ENCODE measurements at regions of chr1 and their contacts with region 1.

Region 1: GRCh38 chr1:150979092-150980056 is 2.7 kb upstream of the ANXA9 start:
- DNase-seq: peak; percentile 90
- H3K4me3 Mint-ChIP-seq: no peak overlapping the region
- H3K27ac Mint-ChIP-seq: peak overlapping the region; percentile 40
- H3K4me1 Mint-ChIP-seq: peaks cover 38% of the 10 kb centered on the region
- H3K27me3 Mint-ChIP-seq: no peaks in the 10 kb centered on the region

Region 2: GRCh38 chr1:150961799-150962198 is 17.6 kb before region 1 on chr1:
- CTCF ChIA-PET with region 1: interaction called, 15 read pairs
- POLR2A ChIA-PET with region 1: interaction called, 14 read pairs
- DNase-seq: no peak
- H3K4me3 Mint-ChIP-seq: no peak overlapping the region
- H3K27ac Mint-ChIP-seq: no peak overlapping the region
- H3K4me1 Mint-ChIP-seq: peaks cover 6% of the 10 kb centered on the region
- H3K27me3 Mint-ChIP-seq: no peaks in the 10 kb centered on the region

Region 3: GRCh38 chr1:150995896-150996295 is 16.5 kb after region 1 on chr1:
- CTCF ChIA-PET with region 1: interaction called, 94 read pairs
- POLR2A ChIA-PET with region 1: interaction called, 7 read pairs
- DNase-seq: peak; percentile 37
- H3K4me3 Mint-ChIP-seq: no peak overlapping the region
- H3K27ac Mint-ChIP-seq: no peak overlapping the region
- H3K4me1 Mint-ChIP-seq: peaks cover 4% of the 10 kb centered on the region
- H3K27me3 Mint-ChIP-seq: no peaks in the 10 kb centered on the region

Region 4: DNA sequence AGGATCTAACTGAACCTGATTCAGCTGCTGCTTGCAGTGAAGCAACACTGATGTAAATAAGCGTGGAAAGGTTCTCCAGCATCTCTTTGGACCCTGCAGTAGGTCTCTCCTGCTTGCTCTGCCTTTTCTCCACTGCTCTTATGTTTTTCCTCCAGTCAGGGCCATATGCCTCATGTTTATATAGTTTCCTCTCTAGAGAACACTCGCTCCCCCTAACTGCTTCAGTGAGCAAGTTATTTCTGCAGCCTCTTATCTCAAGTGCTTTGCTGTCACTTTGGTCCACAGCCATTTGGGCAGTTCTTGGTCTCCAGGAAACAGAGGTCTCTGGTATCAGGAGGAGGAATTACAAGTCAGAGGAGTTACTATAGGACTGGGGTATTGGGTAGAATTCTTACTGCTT is 34.1 kb after region 1 on chr1:
- CTCF ChIA-PET with region 1: no interaction called
- POLR2A ChIA-PET with region 1: no interaction called
- DNase-seq: no peak
- H3K4me3 Mint-ChIP-seq: no peak overlapping the region
- H3K27ac Mint-ChIP-seq: no peak overlapping the region
- H3K4me1 Mint-ChIP-seq: peaks cover 29% of the 10 kb centered on the region
- H3K27me3 Mint-ChIP-seq: no peaks in the 10 kb centered on the region

Region 5: DNA sequence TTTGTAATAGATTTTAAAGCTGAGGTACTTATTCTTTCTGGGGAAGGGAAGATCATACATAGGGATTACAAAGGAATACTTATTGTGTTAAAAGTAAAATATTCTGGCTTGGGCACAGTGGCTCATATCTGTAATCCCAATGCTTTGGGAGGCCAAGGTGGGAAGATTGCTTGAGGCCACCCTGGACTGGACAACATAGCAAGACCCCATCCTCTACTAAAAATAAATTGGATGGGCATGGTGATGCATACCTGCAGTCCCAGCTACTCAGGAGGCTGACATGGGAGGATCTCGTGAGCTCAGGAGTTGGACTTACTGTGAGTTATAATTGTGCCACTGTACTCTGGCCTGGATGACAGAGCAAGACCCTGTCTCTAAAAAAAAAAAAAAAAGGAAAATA is 118.8 kb after region 1 on chr1:
- CTCF ChIA-PET with region 1: no interaction called
- POLR2A ChIA-PET with region 1: no interaction called
- DNase-seq: no peak
- H3K4me3 Mint-ChIP-seq: no peak overlapping the region
- H3K27ac Mint-ChIP-seq: no peak overlapping the region
- H3K4me1 Mint-ChIP-seq: no peaks in the 10 kb centered on the region
- H3K27me3 Mint-ChIP-seq: no peaks in the 10 kb centered on the region

Region 6: GRCh38 chr1:151210830-151211229 is 231.5 kb after region 1 on chr1:
- CTCF ChIA-PET with region 1: no interaction called
- POLR2A ChIA-PET with region 1: no interaction called
- DNase-seq: no peak
- H3K4me3 Mint-ChIP-seq: no peak overlapping the region
- H3K27ac Mint-ChIP-seq: peak overlapping the region; percentile 62
- H3K4me1 Mint-ChIP-seq: peaks cover 30% of the 10 kb centered on the region
- H3K27me3 Mint-ChIP-seq: no peaks in the 10 kb centered on the region